ENCODE measurements at regions of chr12 and their contacts with region 1.

Region 1: DNA sequence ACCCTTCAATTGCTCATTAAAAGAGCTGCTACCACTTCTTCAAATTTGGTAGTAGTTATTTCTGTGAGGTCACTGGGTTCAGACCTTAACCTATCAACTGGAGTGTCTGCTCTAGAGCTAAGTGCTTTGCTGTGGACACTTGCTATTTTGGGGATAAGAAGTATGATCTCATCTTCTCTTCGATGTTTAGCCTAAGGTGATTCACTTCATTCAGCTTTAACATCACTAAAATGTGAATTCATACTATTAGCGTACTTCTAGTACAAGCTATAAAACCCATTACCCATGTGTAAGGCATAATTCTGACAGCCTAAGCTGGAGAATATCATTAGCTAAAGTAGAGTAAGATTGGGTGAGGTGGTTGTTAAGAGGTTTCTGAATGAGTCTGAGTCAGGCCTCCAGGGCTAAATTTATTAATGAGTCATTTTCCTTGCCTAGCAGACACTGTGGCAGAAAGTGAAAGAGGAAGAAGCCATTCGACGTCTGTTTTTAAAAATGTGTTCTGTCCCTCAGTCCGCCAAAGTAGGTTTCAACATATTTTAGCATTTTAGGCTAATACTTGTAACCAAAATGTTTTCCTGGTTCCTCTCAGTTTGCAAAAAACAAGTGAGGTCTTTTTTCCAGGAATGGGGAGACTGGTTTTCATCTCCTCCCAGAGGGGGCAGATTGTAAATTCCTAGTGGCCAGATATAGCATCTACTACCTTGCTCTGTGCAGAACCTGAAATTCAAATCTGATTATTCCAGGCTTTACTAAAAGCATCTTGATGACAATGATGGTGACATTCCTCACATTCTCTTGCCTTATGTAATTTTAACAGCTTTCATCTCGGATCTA is 103.6 kb downstream of the SSPN start:
- DNase-seq: peak; percentile 95
- ATAC-seq: peak; percentile 99
- H3K4me3 ChIP-seq: peak overlapping the region; percentile 60
- H3K27ac ChIP-seq: peak overlapping the region; percentile 75
- H3K4me1 ChIP-seq: peaks cover 20% of the 10 kb centered on the region
- H3K27me3 ChIP-seq: no peaks in the 10 kb centered on the region
- CTCF ChIP-seq: peak; percentile 71

Region 2: GRCh38 chr12:25195056-25195971 is 1103.7 kb before region 1 on chr12 and contains the starts of genes DNAI7 and ETFRF1:
- CTCF ChIA-PET with region 1: no interaction called
- POLR2A ChIA-PET with region 1: no interaction called
- intact Hi-C with region 1: no loop called
- DNase-seq: peak; percentile 95
- ATAC-seq: peak; percentile 95
- H3K4me3 ChIP-seq: peak within 1 kb of the TSS; percentile 95
- H3K27ac ChIP-seq: peak within 1 kb of the TSS; percentile 63
- H3K4me1 ChIP-seq: peaks cover 10% of the 10 kb centered on the region
- H3K27me3 ChIP-seq: no peaks in the 10 kb centered on the region
- CTCF ChIP-seq: 0 out of 2 replicates have a peak, but pooled peaks have one; percentile 15
- total RNA-seq, gene DNAI7: not detected in 2 replicates
- total RNA-seq, gene ETFRF1: 6.6 and 7.7 TPM in 2 replicates

Region 3: GRCh38 chr12:26277506-26278246 is 21.3 kb before region 1 on chr12:
- CTCF ChIA-PET with region 1: no interaction called
- POLR2A ChIA-PET with region 1: no interaction called
- intact Hi-C with region 1: no loop called
- DNase-seq: no peak
- ATAC-seq: no peak
- H3K4me3 ChIP-seq: no peak overlapping the region
- H3K27ac ChIP-seq: no peak overlapping the region
- H3K4me1 ChIP-seq: peaks cover 40% of the 10 kb centered on the region
- H3K27me3 ChIP-seq: no peaks in the 10 kb centered on the region
- CTCF ChIP-seq: no peak

Region 4: DNA sequence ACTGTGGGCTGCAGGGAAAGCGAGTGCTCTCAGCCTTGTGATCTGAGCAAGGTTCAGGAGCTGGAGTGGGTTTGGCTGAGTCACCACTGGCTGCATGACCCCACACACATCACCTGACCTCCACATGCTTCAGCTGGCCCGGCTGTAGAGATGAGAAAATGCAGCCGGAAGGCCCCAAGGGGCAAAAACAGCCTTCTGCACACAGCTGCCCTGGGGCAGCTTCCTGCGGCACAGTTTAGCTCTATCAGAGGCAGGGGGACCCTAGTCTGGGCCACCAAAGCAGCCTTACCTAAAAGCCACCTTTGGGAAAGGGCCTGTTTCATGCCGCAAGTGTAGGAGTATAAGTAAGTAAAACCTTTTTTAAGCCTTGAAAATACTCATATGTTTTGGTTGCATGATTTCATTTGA is 19.7 kb after region 1 on chr12:
- CTCF ChIA-PET with region 1: no interaction called
- POLR2A ChIA-PET with region 1: no interaction called
- intact Hi-C with region 1: loop called (anchors 2 kb)
- DNase-seq: peak; percentile 53
- ATAC-seq: peak; percentile 65
- H3K4me3 ChIP-seq: no peak overlapping the region
- H3K27ac ChIP-seq: peak overlapping the region; percentile 84
- H3K4me1 ChIP-seq: peaks cover 31% of the 10 kb centered on the region
- H3K27me3 ChIP-seq: no peaks in the 10 kb centered on the region
- CTCF ChIP-seq: no peak

Region 5: GRCh38 chr12:26425587-26426260 is 126.7 kb after region 1 on chr12:
- CTCF ChIA-PET with region 1: no interaction called
- POLR2A ChIA-PET with region 1: no interaction called
- intact Hi-C with region 1: no loop called
- DNase-seq: no peak
- ATAC-seq: no peak
- H3K4me3 ChIP-seq: no peak overlapping the region
- H3K27ac ChIP-seq: no peak overlapping the region
- H3K4me1 ChIP-seq: peaks cover 3% of the 10 kb centered on the region; the same call in 1 of the 2 replicates
- H3K27me3 ChIP-seq: no peaks in the 10 kb centered on the region
- CTCF ChIP-seq: no peak

Region 6: GRCh38 chr12:26514364-26514763 is 215.4 kb after region 1 on chr12:
- CTCF ChIA-PET with region 1: no interaction called
- POLR2A ChIA-PET with region 1: interaction called, 10 read pairs
- intact Hi-C with region 1: no loop called
- DNase-seq: no peak
- ATAC-seq: no peak
- H3K4me3 ChIP-seq: no peak overlapping the region
- H3K27ac ChIP-seq: no peak overlapping the region
- H3K4me1 ChIP-seq: no peaks in the 10 kb centered on the region
- H3K27me3 ChIP-seq: no peaks in the 10 kb centered on the region
- CTCF ChIP-seq: no peak

Region 7: GRCh38 chr12:26773313-26774104 is 474.5 kb after region 1 on chr12:
- CTCF ChIA-PET with region 1: no interaction called
- POLR2A ChIA-PET with region 1: no interaction called
- intact Hi-C with region 1: no loop called
- DNase-seq: no peak
- ATAC-seq: no peak
- H3K4me3 ChIP-seq: no peak overlapping the region
- H3K27ac ChIP-seq: no peak overlapping the region
- H3K4me1 ChIP-seq: peaks cover 15% of the 10 kb centered on the region
- H3K27me3 ChIP-seq: no peaks in the 10 kb centered on the region
- CTCF ChIP-seq: no peak

Measured in PC-3 (cell line).